PC-3 (cell line): ENCODE measurements at regions of chr11 and their contacts with region 1.

Region 1: DNA sequence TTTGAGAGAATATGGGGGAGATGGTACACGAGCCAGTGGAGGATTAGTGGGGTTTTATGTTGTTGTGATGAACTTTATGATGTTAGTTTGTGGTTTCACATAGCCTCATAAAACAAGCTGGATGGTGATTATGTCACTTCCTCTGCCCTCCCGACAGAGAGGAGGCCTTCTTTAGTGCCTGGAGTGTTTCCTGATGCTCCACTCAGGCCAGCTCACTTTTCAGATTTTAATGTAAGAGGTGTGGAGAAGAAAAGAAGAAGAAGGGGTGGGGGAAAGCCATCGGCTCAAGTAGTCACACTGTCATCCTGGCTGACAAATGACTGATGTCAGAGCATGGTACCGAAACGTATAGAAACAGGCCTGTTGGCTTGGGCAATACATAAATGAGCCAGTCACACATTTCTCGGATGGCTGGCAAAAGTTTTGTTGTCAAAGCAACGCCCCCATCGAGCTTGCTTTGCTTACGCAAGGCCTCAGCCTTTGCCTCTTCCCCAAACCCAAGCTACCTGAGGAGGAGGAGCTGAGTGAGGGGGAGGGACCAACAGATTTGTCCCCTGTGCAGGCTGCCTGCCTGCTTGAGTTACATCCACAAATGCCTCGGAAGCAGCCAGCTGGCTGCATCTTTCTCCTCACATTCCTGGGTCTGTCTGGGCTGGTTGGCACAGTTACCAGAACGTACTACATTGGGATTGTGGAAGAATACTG is at the start of gene HEPHL1:
- DNase-seq: peak; percentile 94
- ATAC-seq: peak; percentile 83
- H3K4me3 ChIP-seq: peak within 1 kb of the TSS; percentile 2; the same call in 1 of the 2 replicates
- H3K27ac ChIP-seq: peak within 1 kb of the TSS; percentile 69
- H3K4me1 ChIP-seq: peaks cover 61% of the 10 kb centered on the region
- H3K27me3 ChIP-seq: no peaks in the 10 kb centered on the region
- CTCF ChIP-seq: no peak
- total RNA-seq, gene HEPHL1: 3.3 and 4.4 TPM in 2 replicates

Region 2: GRCh38 chr11:93939084-93939760 is 81.7 kb before region 1 on chr11:
- CTCF ChIA-PET with region 1: no interaction called
- POLR2A ChIA-PET with region 1: no interaction called
- intact Hi-C with region 1: loop called (anchors 5 kb)
- DNase-seq: peak; percentile 98
- ATAC-seq: peak; percentile 74
- H3K4me3 ChIP-seq: peak overlapping the region; percentile 13; the same call in 1 of the 2 replicates
- H3K27ac ChIP-seq: peak overlapping the region; percentile 98
- H3K4me1 ChIP-seq: peaks cover 79% of the 10 kb centered on the region
- H3K27me3 ChIP-seq: no peaks in the 10 kb centered on the region
- CTCF ChIP-seq: no peak

Region 3: GRCh38 chr11:93945596-93945995 is 75.3 kb before region 1 on chr11:
- CTCF ChIA-PET with region 1: no interaction called
- POLR2A ChIA-PET with region 1: no interaction called
- intact Hi-C with region 1: loop called (anchors 5 kb)
- DNase-seq: no peak
- ATAC-seq: no peak
- H3K4me3 ChIP-seq: no peak overlapping the region
- H3K27ac ChIP-seq: peak overlapping the region; percentile 51
- H3K4me1 ChIP-seq: peaks cover 49% of the 10 kb centered on the region
- H3K27me3 ChIP-seq: no peaks in the 10 kb centered on the region
- CTCF ChIP-seq: no peak

Region 4: GRCh38 chr11:94046796-94047195 is 25.9 kb after region 1 on chr11:
- CTCF ChIA-PET with region 1: no interaction called
- POLR2A ChIA-PET with region 1: no interaction called
- intact Hi-C with region 1: no loop called
- DNase-seq: peak; percentile 61
- ATAC-seq: no peak
- H3K4me3 ChIP-seq: no peak overlapping the region
- H3K27ac ChIP-seq: no peak overlapping the region
- H3K4me1 ChIP-seq: peaks cover 8% of the 10 kb centered on the region; the same call in 1 of the 2 replicates
- H3K27me3 ChIP-seq: no peaks in the 10 kb centered on the region
- CTCF ChIP-seq: no peak

Region 5: GRCh38 chr11:94457118-94458029 is 436.4 kb after region 1 on chr11:
- CTCF ChIA-PET with region 1: no interaction called
- POLR2A ChIA-PET with region 1: no interaction called
- intact Hi-C with region 1: no loop called
- DNase-seq: no peak
- ATAC-seq: no peak
- H3K4me3 ChIP-seq: no peak overlapping the region
- H3K27ac ChIP-seq: no peak overlapping the region
- H3K4me1 ChIP-seq: peaks cover 21% of the 10 kb centered on the region
- H3K27me3 ChIP-seq: no peaks in the 10 kb centered on the region
- CTCF ChIP-seq: no peak